ENCODE measurements at regions of chr14 and their contacts with region 1.

Region 1: GRCh38 chr14:23068476-23069412 is 11.4 kb upstream of the CDH24 start:
- DNase-seq: peak; percentile 80
- H3K4me3 Mint-ChIP-seq: no peak overlapping the region
- H3K27ac Mint-ChIP-seq: peak overlapping the region; percentile 36
- H3K4me1 Mint-ChIP-seq: peaks cover 37% of the 10 kb centered on the region
- H3K27me3 Mint-ChIP-seq: no peaks in the 10 kb centered on the region

Region 2: GRCh38 chr14:22918804-22919600 is 149.7 kb before region 1 on chr14 and contains the start of gene RBM23:
- CTCF ChIA-PET with region 1: interaction called, 17 read pairs
- POLR2A ChIA-PET with region 1: interaction called, 3 read pairs
- DNase-seq: peak; percentile 100
- H3K4me3 Mint-ChIP-seq: peak within 1 kb of the TSS; percentile 90
- H3K27ac Mint-ChIP-seq: peak within 1 kb of the TSS; percentile 98
- H3K4me1 Mint-ChIP-seq: peaks cover 42% of the 10 kb centered on the region
- H3K27me3 Mint-ChIP-seq: no peaks in the 10 kb centered on the region
- total RNA-seq, gene RBM23: 71.8 to 73.5 TPM

Region 3: GRCh38 chr14:22973217-22974032 is 95.3 kb before region 1 on chr14:
- CTCF ChIA-PET with region 1: interaction called, 17 read pairs
- POLR2A ChIA-PET with region 1: interaction called, 3 read pairs
- DNase-seq: peak; percentile 43
- H3K4me3 Mint-ChIP-seq: no peak overlapping the region
- H3K27ac Mint-ChIP-seq: no peak overlapping the region
- H3K4me1 Mint-ChIP-seq: no peaks in the 10 kb centered on the region
- H3K27me3 Mint-ChIP-seq: peaks cover 13% of the 10 kb centered on the region

Region 4: GRCh38 chr14:23000860-23001259 is 67.9 kb before region 1 on chr14:
- CTCF ChIA-PET with region 1: interaction called, 42 read pairs
- POLR2A ChIA-PET with region 1: interaction called, 4 read pairs
- DNase-seq: no peak
- H3K4me3 Mint-ChIP-seq: no peak overlapping the region
- H3K27ac Mint-ChIP-seq: no peak overlapping the region
- H3K4me1 Mint-ChIP-seq: peaks cover 7% of the 10 kb centered on the region
- H3K27me3 Mint-ChIP-seq: no peaks in the 10 kb centered on the region

Region 5: GRCh38 chr14:23057757-23058653 is 10.7 kb before region 1 on chr14:
- CTCF ChIA-PET with region 1: interaction called, 42 read pairs
- POLR2A ChIA-PET with region 1: interaction called, 15 read pairs
- DNase-seq: peak; percentile 89
- H3K4me3 Mint-ChIP-seq: peak overlapping the region; percentile 77
- H3K27ac Mint-ChIP-seq: peak overlapping the region; percentile 58
- H3K4me1 Mint-ChIP-seq: peaks cover 17% of the 10 kb centered on the region
- H3K27me3 Mint-ChIP-seq: peaks cover 8% of the 10 kb centered on the region

Region 6: GRCh38 chr14:23095196-23096108 is 26.7 kb after region 1 on chr14 and contains the start of gene C14orf119:
- CTCF ChIA-PET with region 1: interaction called, 40 read pairs
- POLR2A ChIA-PET with region 1: interaction called, 37 read pairs
- DNase-seq: peak; percentile 100
- H3K4me3 Mint-ChIP-seq: no peak within 1 kb of the TSS
- H3K27ac Mint-ChIP-seq: no peak within 1 kb of the TSS
- H3K4me1 Mint-ChIP-seq: peaks cover 36% of the 10 kb centered on the region
- H3K27me3 Mint-ChIP-seq: no peaks in the 10 kb centered on the region
- total RNA-seq, gene C14orf119: 49.2 to 55.5 TPM

Measured in activated CD4-positive, alpha-beta memory T cell treated with anti-CD3 and anti-CD28 coated beads, Interleukin-2, amount 10 ng/mL, durations not matched to agents 7 days and 5 days (primary cell).